Right lobe of liver (tissue), 6 donors: ENCODE measurements at regions of chr19 and their contacts with region 1.

Region 1: GRCh38 chr19:737581-738093 is 13.3 kb upstream of the MISP start:
- DNase-seq: no peak
- ATAC-seq: peak; percentile 40 to 54 (median 42)
- H3K4me3 ChIP-seq: no peak overlapping the region
- H3K27ac ChIP-seq: no peak overlapping the region
- H3K4me1 ChIP-seq: peaks cover 0 to 4% (median 0%) of the 10 kb centered on the region in 4 donors
- H3K27me3 ChIP-seq: no peaks in the 10 kb centered on the region
- CTCF ChIP-seq: peak; percentile 32 to 40 (median 38)
- POLR2A ChIP-seq: no peak

Region 2: DNA sequence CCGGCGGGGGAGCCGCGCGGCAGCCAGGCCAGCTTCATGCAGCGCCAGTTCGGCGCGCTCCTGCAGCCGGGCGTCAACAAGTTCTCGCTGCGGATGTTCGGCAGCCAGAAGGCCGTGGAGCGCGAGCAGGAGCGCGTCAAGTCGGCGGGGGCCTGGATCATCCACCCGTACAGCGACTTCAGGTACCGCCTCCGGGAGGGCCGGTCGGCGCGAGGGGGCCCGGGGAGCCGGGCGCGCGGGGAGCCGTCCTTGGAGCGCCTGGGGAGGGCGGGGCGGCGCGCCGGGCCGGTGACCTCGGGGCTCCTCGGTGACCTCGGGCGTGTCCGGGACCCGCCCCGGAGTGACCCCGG is 147.3 kb before region 1 on chr19:
- intact Hi-C with region 1: loop called in 1 of 2 experiments (anchors 10 kb)
- DNase-seq: peak in 1 of 3 donors; percentile 23
- ATAC-seq: no peak
- H3K4me3 ChIP-seq: no peak overlapping the region
- H3K27ac ChIP-seq: no peak overlapping the region
- H3K4me1 ChIP-seq: no peaks in the 10 kb centered on the region
- H3K27me3 ChIP-seq: peaks cover 0 to 33% of the 10 kb centered on the region in 2 donors
- CTCF ChIP-seq: no peak
- POLR2A ChIP-seq: no peak

Region 3: GRCh38 chr19:677201-677600 is 60.4 kb before region 1 on chr19:
- intact Hi-C with region 1: no loop called
- DNase-seq: peak in 1 of 3 donors; percentile 42
- ATAC-seq: no peak
- H3K4me3 ChIP-seq: peak overlapping the region; percentile 23 to 32 (median 27)
- H3K27ac ChIP-seq: peak overlapping the region; percentile 31 to 75 (median 53)
- H3K4me1 ChIP-seq: peaks cover 0 to 15% (median 0%) of the 10 kb centered on the region in 4 donors
- H3K27me3 ChIP-seq: no peaks in the 10 kb centered on the region
- CTCF ChIP-seq: no peak
- POLR2A ChIP-seq: no peak